ENCODE measurements at regions of chr16 and their contacts with region 1.

Region 1: DNA sequence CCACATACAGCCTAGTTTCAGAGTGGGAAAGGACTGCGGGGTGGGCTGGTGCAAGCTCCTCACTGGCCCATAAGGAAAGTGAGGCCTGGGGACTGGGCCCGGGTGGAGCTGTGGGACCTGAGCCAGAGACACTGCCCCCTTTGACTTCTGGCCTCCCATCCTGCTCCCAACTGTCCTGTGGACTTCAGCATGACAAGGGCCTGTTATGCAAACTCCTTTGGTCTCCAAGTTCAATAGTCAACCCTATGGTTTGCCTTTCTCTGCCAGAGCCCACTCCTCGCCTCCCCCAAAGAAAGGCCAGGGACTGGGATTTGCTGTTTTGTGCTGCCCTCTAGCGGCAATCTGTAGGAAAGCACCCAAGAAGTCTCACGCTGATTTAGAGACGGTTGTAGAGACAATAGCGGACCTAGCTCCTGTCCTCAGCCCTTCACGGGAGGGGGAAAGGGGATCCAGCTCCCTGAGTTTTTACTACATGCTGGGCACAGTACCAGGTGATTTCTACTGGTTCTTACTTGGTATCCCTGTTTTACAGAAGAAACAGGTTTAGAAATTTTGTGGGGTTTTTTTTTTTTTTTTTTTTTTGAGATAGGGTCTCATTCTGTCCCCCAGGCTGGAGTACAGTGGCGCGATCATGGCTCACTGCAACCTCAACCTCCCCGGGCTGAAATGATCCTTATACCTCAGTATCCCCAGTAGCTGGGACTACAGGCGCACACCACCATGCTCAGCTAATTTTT is 1.2 kb upstream of the TLCD3B start:
- H3K4me3 ChIP-seq: no peak overlapping the region
- H3K27ac ChIP-seq: no peak overlapping the region
- H3K4me1 ChIP-seq: no peaks in the 10 kb centered on the region
- CTCF ChIP-seq: peak; percentile 91

Region 2: DNA sequence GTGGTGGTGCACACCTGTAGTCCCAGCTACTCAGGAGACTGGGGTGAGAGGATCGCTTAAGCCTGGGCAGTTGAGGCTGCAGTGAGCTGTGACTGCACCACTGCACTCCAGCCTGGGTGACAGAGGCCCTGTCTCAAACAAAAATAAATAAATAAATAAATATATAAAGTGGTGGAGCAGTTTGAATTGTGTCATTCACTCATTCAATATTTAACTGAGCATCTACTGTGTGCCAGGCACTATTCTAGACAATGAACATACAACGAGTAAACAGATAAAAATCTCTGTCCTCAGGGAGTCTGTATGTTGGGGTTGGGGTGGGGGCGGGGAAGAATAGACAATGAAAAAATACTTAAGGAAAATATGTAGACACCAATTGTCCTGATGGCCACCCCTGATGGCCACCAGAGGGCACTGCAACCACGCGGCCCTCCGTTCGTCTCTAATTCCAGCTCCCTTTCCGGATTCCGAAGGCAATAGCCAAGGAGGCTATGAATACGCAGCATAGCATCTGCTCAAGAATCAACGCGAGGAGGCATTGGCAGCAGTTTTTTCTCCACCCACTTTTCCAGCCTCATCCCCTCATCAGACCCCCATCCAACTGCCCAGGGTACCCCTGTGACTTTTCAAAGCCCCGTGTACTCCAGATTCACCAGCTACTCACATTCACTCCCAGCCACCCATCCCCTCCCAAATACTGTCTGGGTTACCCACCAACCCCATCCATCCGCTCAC is 331.8 kb before region 1 on chr16:
- CTCF ChIA-PET with region 1: interaction called, 20 read pairs
- POLR2A ChIA-PET with region 1: no interaction called
- H3K4me3 ChIP-seq: no peak overlapping the region
- H3K27ac ChIP-seq: no peak overlapping the region
- H3K4me1 ChIP-seq: no peaks in the 10 kb centered on the region
- CTCF ChIP-seq: peak; percentile 75

Region 3: GRCh38 chr16:29815793-29816693 is 216.2 kb before region 1 on chr16 and contains the start of gene PAGR1:
- CTCF ChIA-PET with region 1: interaction called, 12 read pairs
- POLR2A ChIA-PET with region 1: interaction called, 3 read pairs
- H3K4me3 ChIP-seq: peak within 1 kb of the TSS; percentile 78
- H3K27ac ChIP-seq: peak within 1 kb of the TSS; percentile 96
- H3K4me1 ChIP-seq: peaks cover 19% of the 10 kb centered on the region
- CTCF ChIP-seq: no peak

Region 4: GRCh38 chr16:30018731-30019158 is 13.5 kb before region 1 on chr16:
- CTCF ChIA-PET with region 1: interaction called, 34 read pairs
- POLR2A ChIA-PET with region 1: no interaction called
- H3K4me3 ChIP-seq: no peak overlapping the region
- H3K27ac ChIP-seq: no peak overlapping the region
- H3K4me1 ChIP-seq: no peaks in the 10 kb centered on the region
- CTCF ChIP-seq: no peak

Region 5: GRCh38 chr16:30052671-30053372 is 20.6 kb after region 1 on chr16:
- CTCF ChIA-PET with region 1: interaction called, 16 read pairs
- POLR2A ChIA-PET with region 1: interaction called, 5 read pairs
- H3K4me3 ChIP-seq: peak overlapping the region; percentile 63
- H3K27ac ChIP-seq: peak overlapping the region; percentile 65
- H3K4me1 ChIP-seq: peaks cover 3% of the 10 kb centered on the region; the same call in 1 of the 2 replicates
- CTCF ChIP-seq: peak; percentile 38; the same call in 1 of the 2 replicates

Region 6: DNA sequence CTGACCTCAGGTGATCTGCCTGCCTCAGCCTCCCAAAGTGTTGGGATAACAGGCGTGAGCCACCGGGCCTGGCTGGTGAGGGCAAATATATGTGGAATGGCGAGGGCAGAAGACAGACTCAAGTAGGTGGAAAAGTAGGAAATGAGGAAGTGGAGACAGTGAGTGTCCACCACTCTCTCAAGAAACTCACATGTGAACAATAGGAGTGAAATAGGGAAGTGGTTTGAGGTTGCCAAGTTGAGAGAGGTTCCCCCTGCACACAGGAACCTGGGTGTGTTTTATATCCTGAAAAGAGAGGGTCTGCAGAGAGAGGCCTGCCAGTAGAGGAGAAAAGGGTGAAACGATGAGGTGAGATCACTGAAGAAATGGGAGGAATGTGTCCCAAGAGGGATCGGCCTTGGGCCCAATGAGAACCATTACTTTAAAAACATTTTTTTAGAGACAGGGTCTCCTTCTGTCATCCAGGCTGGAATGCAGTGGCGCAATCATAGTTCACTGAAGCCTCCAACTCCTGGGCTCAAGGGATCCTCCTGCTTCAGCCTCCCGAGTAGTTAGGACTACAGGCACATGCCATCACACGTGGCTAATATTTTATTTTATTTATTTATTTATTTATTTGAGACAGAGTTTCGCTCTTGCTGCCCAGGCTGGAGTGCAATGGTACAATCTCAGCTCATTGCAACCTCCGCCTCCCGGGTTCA is 134.1 kb after region 1 on chr16:
- CTCF ChIA-PET with region 1: no interaction called
- POLR2A ChIA-PET with region 1: no interaction called
- H3K4me3 ChIP-seq: no peak overlapping the region
- H3K27ac ChIP-seq: no peak overlapping the region
- H3K4me1 ChIP-seq: no peaks in the 10 kb centered on the region
- CTCF ChIP-seq: no peak

Measured in HEK293 (cell line).